WTC11 (cell line): ENCODE measurements at regions of chr1 and their contacts with region 1.

Region 1: GRCh38 chr1:6052543-6053205 is 7.0 kb downstream of the KCNAB2 start:
- DNase-seq: peak; percentile 82
- ATAC-seq: peak; percentile 81
- H3K4me3 Mint-ChIP-seq: peak overlapping the region; percentile 48
- H3K27ac Mint-ChIP-seq: no peak overlapping the region; the same call in 1 of the 2 replicates
- H3K4me1 Mint-ChIP-seq: peaks cover 11% of the 10 kb centered on the region
- H3K27me3 Mint-ChIP-seq: no peaks in the 10 kb centered on the region
- CTCF ChIP-seq: peak; percentile 40

Region 2: DNA sequence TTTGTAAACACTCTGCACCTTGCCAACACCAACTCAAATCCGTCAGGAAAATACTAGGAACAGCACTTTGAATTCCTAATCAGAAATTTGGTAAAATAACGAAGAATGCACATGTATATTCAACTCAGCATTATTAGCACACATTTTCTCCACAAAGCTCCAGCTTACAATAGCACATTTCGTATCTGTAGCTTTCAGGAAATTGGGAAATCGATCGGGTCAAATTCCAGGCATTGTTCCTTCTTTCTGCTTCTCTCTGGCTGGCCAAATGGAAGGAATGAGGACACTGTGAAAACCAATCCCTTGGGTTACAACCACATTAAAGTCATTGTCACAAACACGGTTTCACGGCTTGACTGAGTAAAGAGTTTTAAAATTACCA is 119.0 kb before region 1 on chr1:
- CTCF ChIA-PET with region 1: no interaction called
- POLR2A ChIA-PET with region 1: no interaction called
- DNase-seq: no peak
- ATAC-seq: no peak
- H3K4me3 Mint-ChIP-seq: no peak overlapping the region
- H3K27ac Mint-ChIP-seq: peak overlapping the region; percentile 40
- H3K4me1 Mint-ChIP-seq: peaks cover 13% of the 10 kb centered on the region
- H3K27me3 Mint-ChIP-seq: no peaks in the 10 kb centered on the region
- CTCF ChIP-seq: no peak

Region 3: GRCh38 chr1:6026095-6026809 is 26.4 kb before region 1 on chr1:
- CTCF ChIA-PET with region 1: interaction called, 13 read pairs
- POLR2A ChIA-PET with region 1: no interaction called
- DNase-seq: peak; percentile 75
- ATAC-seq: peak; percentile 92
- H3K4me3 Mint-ChIP-seq: no peak overlapping the region
- H3K27ac Mint-ChIP-seq: no peak overlapping the region
- H3K4me1 Mint-ChIP-seq: peaks cover 4% of the 10 kb centered on the region; the same call in 1 of the 2 replicates
- H3K27me3 Mint-ChIP-seq: no peaks in the 10 kb centered on the region; the same call in 1 of the 2 replicates
- CTCF ChIP-seq: no peak

Region 4: GRCh38 chr1:6041432-6042062 is 11.1 kb before region 1 on chr1:
- CTCF ChIA-PET with region 1: interaction called, 11 read pairs
- POLR2A ChIA-PET with region 1: no interaction called
- DNase-seq: peak; percentile 82
- ATAC-seq: peak; percentile 86
- H3K4me3 Mint-ChIP-seq: no peak overlapping the region
- H3K27ac Mint-ChIP-seq: no peak overlapping the region
- H3K4me1 Mint-ChIP-seq: peaks cover 7% of the 10 kb centered on the region
- H3K27me3 Mint-ChIP-seq: no peaks in the 10 kb centered on the region
- CTCF ChIP-seq: peak; percentile 80

Region 5: DNA sequence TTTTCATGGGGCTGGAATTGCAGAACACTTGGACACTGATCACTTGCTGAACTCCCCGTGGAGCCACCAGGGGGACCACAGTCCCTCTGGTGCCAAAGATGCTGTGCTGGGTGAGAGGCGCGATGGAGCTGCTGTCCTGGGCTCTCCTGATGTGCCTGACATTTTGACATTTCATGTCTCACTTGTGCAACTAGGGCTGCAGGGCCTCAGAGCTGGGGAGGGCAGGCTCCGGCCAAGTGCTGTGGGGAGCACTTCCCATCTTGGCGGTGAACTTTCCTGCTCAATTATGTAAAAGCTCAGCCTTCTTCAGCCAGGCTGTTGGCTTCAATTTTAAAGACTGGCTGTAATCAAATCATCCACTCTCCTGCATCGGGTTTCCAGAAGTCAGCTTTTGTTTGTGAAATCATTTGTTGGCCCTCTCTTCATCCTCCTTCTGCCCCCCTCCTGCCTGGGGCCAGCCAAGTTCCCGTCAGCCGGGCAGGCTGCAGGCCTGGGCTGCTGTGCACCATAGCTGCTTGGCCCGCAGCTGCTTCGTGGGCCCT is 29.8 kb after region 1 on chr1:
- CTCF ChIA-PET with region 1: interaction called, 13 read pairs
- POLR2A ChIA-PET with region 1: no interaction called
- DNase-seq: no peak
- ATAC-seq: peak; percentile 58
- H3K4me3 Mint-ChIP-seq: no peak overlapping the region
- H3K27ac Mint-ChIP-seq: no peak overlapping the region
- H3K4me1 Mint-ChIP-seq: peaks cover 5% of the 10 kb centered on the region; the same call in 1 of the 2 replicates
- H3K27me3 Mint-ChIP-seq: no peaks in the 10 kb centered on the region
- CTCF ChIP-seq: no peak

Region 6: DNA sequence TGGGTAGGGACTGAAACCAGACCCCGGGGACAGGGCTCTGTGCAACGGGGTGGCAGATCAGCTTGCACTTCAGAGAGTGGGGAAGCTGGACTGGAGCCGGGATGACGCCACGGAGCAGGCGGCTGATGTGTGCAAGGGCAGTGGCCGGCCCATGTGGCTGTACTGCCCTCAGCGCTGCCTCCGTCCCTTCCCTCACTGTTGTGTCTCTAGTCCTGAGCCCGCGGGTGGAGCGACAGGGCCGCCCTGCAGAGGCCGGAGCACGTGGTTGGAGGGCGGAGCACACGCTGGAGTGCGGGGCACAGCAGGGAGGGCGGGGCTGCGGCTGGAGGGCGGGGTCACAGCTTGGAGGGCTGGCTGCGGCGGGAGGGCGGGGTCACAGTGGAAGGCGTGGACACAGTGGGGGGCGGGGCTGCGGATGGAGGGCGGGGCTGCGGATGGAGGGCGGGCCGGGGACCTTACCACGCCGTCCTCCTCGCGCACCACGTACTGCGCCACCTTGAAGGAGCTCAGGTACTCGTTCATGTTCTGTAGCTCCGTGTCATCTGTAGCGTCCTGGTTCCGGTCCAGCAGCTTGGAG is 75.0 kb after region 1 on chr1:
- CTCF ChIA-PET with region 1: interaction called, 16 read pairs
- POLR2A ChIA-PET with region 1: no interaction called
- DNase-seq: peak; percentile 93
- ATAC-seq: peak; percentile 92
- H3K4me3 Mint-ChIP-seq: peak overlapping the region; percentile 44; the same call in 1 of the 2 replicates
- H3K27ac Mint-ChIP-seq: no peak overlapping the region
- H3K4me1 Mint-ChIP-seq: 0 out of 2 replicates have a peak, but pooled peaks cover 3% of the 10 kb centered on the region
- H3K27me3 Mint-ChIP-seq: peaks cover 25% of the 10 kb centered on the region
- CTCF ChIP-seq: no peak

Region 7: DNA sequence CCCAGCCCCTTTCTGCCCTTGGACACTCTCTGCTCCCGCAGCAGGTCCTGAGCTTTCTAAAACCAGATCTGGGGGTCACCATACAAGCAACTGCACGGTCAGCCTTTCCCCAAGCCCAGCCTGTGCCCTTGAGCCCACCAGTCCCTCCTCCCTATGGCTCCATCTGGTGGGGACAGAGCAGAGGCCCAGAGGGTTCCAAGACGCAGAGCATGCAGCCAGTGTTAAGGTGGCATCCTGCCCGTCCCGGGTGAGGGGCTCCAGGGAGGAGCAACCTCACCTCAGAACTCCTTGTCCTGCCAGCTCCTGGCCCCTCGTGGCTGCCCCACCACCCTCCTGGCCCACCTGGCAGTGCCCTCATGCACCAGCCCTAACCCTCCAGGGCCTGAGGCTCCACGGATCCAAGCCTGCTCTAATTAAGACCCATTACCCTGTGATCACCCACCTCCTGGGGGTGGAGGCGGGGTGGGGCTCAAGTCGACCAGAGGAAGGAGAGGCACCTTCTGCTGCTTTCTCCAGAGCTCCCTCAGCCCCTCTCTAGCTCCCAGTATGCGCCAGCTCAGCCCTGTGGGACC is 119.0 kb after region 1 on chr1:
- CTCF ChIA-PET with region 1: interaction called, 10 read pairs
- POLR2A ChIA-PET with region 1: no interaction called
- DNase-seq: peak; percentile 69
- ATAC-seq: peak; percentile 93
- H3K4me3 Mint-ChIP-seq: no peak overlapping the region
- H3K27ac Mint-ChIP-seq: no peak overlapping the region; the same call in 1 of the 2 replicates
- H3K4me1 Mint-ChIP-seq: no peaks in the 10 kb centered on the region
- H3K27me3 Mint-ChIP-seq: peaks cover 5% of the 10 kb centered on the region
- CTCF ChIP-seq: no peak

Region 8: DNA sequence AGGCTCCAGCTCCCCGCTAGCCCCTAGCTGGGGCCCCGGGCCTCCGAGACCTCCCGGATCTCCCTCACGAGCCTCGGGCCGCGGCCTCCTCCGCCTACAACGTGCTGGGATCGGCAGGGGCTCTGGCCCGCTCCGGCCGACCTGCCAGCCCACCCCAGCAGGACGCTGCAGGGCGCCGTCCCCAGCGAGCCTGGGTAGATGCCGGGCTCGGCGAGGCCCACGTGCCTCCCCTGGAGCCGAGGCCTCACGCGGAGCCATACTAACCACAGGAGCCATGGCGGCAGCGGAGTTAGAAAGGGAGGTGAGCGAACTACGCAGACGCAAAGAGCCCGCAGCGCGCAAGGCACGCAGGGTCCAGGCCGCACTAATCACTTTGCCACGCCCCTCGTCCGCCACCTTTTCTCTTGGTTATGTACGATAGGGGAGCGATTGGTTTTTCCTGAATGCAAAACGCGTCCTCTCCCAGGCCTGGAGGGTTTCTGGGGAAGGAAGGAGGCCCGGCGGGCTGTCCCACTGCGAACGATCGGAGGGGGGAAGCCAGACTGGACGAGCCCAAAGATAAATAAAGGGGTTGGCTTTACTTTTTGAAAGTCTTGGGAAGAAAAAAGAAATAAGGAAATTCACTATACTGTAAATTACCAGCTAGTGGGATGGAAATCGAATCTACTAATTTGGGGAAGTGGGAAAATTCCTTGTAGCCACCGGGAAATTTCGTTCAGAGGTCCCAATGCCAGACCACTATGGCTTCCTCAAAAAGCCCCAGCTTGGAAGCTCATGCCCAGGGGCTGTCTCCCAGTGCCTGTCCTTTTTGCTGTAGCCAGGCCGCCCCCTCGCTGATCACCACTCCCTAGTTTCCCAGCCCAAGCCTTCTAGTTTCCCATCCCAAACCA is 146.9 kb after region 1 on chr1 and contains the start of gene RPL22:
- CTCF ChIA-PET with region 1: interaction called, 14 read pairs
- POLR2A ChIA-PET with region 1: no interaction called
- DNase-seq: peak; percentile 99
- ATAC-seq: peak; percentile 93
- H3K4me3 Mint-ChIP-seq: peak within 1 kb of the TSS; percentile 97
- H3K27ac Mint-ChIP-seq: peak within 1 kb of the TSS; percentile 96
- H3K4me1 Mint-ChIP-seq: peaks cover 37% of the 10 kb centered on the region
- H3K27me3 Mint-ChIP-seq: no peaks in the 10 kb centered on the region
- CTCF ChIP-seq: no peak
- total RNA-seq, gene RPL22: 441 to 512 TPM (median 491 TPM) in 3 replicates